ENCODE measurements at regions of chr2 and their contacts with region 1.

Region 1: GRCh38 chr2:149587220-149587949 is at the start of gene MMADHC:
- DNase-seq: peak; percentile 93 to 96
- ATAC-seq: peak; percentile 96 to 98
- H3K4me3 ChIP-seq: peak within 1 kb of the TSS; percentile 75 to 93 (median 92)
- H3K27ac ChIP-seq: peak within 1 kb of the TSS; percentile 92 to 98 (median 97)
- H3K4me1 ChIP-seq: peaks cover 25 to 47% of the 10 kb centered on the region in 2 donors
- H3K27me3 ChIP-seq: no peaks in the 10 kb centered on the region
- CTCF ChIP-seq: no peak
- POLR2A ChIP-seq: peak; percentile 80 to 87
- total RNA-seq, gene MMADHC: 140 to 205 (median 169) TPM

Region 2: DNA sequence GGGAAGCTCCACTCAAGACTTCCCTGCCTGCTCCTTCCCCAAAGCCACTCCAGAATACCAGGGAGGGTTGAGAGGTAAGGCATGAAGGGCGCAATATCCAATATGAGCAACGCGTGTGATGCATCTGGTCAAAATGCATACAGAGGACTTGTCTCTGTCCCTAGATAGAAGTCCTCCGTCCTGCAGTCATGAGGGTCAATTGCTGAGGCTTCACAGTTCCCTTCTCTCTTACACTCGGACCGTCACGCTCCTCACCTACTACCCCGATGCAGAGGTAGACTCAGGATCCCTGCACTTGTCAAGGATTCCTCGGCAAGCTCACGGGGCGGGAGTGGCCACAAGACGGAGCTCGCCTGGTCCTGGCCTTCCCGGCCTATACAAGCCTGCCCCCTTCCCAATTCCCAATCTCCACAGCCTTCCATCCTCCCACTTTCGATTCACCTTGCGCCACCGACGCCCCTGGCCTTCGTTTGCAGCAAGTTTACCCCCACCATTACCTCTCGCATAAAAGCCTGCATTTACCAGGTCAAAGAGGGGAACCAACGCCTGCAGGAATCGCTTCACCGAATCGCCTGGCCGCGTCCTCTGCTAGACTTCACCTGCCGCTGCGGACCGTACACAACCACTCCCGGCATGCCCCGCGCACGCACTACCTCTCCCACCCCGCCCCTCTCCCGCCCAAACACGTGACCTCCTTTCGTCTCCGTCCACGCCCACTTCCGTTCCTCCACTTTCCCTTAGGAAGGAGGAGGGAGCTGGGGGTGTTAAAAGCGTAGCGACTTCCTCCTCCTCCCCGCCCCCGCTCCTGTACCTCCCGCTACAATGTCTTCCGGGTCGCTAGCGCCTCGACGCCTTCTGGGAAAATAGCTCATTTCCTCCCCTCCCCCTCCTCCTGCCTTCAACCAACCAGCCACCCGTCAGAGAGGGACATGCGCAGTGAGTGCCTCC is 1567.0 kb before region 1 on chr2 and contains the start of gene ORC4:
- in situ Hi-C with region 1: no loop called
- intact Hi-C with region 1: loop called (anchors 10 kb)
- DNase-seq: peak; percentile 99
- ATAC-seq: peak; percentile 96 to 98
- H3K4me3 ChIP-seq: peak within 1 kb of the TSS; percentile 84 to 98 (median 90)
- H3K27ac ChIP-seq: peak within 1 kb of the TSS; percentile 95 to 99 (median 98)
- H3K4me1 ChIP-seq: peaks cover 40 to 49% of the 10 kb centered on the region in 2 donors
- H3K27me3 ChIP-seq: no peaks in the 10 kb centered on the region
- CTCF ChIP-seq: peak in 4 of 5 experiments; percentile 12 to 53 (median 34)
- POLR2A ChIP-seq: peak; percentile 55 to 62
- total RNA-seq, gene ORC4: 34.8 to 51.8 (median 43.1) TPM

Region 3: GRCh38 chr2:149271575-149271974 is 315.8 kb before region 1 on chr2:
- in situ Hi-C with region 1: no loop called
- intact Hi-C with region 1: no loop called
- DNase-seq: no peak
- ATAC-seq: no peak
- H3K4me3 ChIP-seq: no peak overlapping the region
- H3K27ac ChIP-seq: no peak overlapping the region
- H3K4me1 ChIP-seq: no peaks in the 10 kb centered on the region
- H3K27me3 ChIP-seq: no peaks in the 10 kb centered on the region
- CTCF ChIP-seq: no peak
- POLR2A ChIP-seq: no peak

Region 4: DNA sequence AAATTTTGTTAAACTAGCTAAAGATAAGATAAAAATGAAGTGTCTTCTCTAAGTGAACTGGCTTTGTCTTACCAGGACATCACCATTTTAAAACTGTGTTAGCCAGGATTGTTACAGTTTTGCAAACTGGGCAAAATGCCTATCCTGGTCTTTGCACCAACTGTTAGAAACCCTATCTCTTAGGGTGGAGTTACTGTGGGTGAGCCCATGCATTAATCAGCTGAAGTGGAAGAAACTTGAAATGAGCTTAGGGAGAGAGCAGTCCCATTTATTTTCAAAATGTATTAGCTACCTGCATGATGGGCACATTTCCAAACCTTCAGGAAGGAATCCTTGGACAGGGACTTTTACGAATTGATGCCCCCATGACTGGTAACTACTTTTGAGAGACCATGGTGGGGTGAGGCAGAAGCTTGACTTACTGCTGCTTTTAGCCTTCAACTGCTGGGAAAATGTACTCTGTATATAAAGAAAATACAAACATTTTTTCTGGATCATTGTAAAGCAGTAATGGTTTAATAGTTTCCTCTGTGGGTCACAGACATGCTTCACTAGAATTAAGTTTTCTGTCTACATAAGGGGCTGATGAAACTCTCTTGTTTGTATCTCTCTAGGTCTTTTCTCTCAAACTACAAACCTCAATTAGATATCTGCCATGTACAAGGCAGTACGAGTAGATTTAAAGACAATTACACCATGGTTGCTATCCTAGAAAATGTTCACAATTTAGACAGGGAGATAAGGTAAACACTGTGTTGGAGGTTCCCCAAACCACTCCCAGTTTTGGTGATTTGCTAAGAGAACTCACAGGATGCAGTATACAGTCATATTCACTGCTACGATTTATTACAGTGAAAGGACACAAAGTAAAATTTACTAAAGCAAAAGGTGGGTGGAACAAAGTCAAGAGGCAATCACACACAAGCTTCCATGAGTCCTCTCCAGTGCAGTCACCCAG is 321.6 kb after region 1 on chr2:
- in situ Hi-C with region 1: no loop called
- intact Hi-C with region 1: no loop called
- DNase-seq: no peak
- ATAC-seq: no peak
- H3K4me3 ChIP-seq: no peak overlapping the region
- H3K27ac ChIP-seq: no peak overlapping the region
- H3K4me1 ChIP-seq: no peaks in the 10 kb centered on the region
- H3K27me3 ChIP-seq: no peaks in the 10 kb centered on the region
- CTCF ChIP-seq: no peak
- POLR2A ChIP-seq: no peak

Measured in gastrocnemius medialis (tissue), 4 donors.